ENCODE measurements at regions of chr13 and their contacts with region 1.

Region 1: DNA sequence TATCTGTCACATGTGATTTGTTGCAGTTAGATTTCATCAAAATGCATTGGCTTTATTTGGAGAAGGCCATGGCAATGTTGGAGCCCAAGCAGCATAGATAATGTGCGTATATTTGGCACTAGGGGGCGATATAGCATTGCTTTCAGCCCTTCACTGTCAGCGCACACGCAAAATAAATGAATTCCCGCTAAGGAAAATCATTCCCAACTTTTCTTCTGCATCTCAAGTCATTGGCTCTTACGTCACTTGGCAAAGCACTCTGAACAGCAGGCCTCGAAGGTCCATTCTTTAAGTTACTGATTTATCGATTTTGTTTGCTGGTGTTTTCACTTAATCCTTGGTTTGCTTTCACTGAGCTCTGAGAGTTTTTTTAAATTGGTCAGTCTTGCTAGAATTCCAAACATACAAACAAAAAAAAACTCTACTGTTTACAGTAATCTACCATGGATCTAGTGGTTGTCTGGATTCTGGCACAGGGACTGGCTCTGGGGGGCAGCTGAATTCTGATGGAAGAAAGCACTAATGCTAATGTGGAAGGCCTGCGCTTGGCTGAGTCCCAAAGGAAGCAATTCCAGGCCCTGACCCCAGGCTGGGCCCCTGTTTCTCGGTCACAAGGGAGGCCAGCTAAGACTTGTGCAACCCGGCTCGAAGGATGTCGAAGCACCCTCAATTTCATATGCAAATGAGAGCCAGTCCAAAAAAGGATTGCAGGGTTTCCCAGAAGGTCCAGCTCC is 97.7 kb upstream of the IPO5 start:
- DNase-seq: peak; percentile 61
- H3K4me3 ChIP-seq: no peak overlapping the region
- H3K27ac ChIP-seq: no peak overlapping the region
- H3K4me1 ChIP-seq: peaks cover 4% of the 10 kb centered on the region
- CTCF ChIP-seq: peak; percentile 83

Region 2: GRCh38 chr13:97386801-97387484 is 468.8 kb before region 1 on chr13:
- CTCF ChIA-PET with region 1: no interaction called
- POLR2A ChIA-PET with region 1: no interaction called
- intact Hi-C with region 1: no loop called
- DNase-seq: no peak
- H3K4me3 ChIP-seq: no peak overlapping the region
- H3K27ac ChIP-seq: no peak overlapping the region
- H3K4me1 ChIP-seq: no peaks in the 10 kb centered on the region
- CTCF ChIP-seq: no peak

Region 3: DNA sequence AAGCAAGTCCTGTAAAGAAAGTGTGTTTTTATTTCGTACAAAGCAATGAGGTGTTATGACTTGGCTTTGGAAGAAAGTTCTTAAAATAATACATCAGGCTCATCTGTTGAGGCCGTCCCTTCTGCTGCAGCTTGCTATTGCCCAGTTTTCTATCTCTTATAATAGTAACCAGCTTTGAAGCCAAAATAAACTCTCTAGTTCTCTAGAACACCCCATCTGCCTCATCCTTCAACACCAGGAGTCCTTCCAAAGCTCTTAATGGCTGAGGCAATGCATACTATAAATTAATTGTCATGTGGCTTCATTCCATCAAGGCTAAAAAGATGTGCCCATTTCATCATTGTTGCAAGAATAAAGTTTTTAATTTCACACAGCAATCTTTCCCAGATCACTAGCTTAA is 48.3 kb after region 1 on chr13:
- CTCF ChIA-PET with region 1: no interaction called
- POLR2A ChIA-PET with region 1: no interaction called
- intact Hi-C with region 1: no loop called
- DNase-seq: no peak
- H3K4me3 ChIP-seq: no peak overlapping the region
- H3K27ac ChIP-seq: no peak overlapping the region
- H3K4me1 ChIP-seq: no peaks in the 10 kb centered on the region
- CTCF ChIP-seq: no peak

Region 4: GRCh38 chr13:97975848-97976609 is 120.3 kb after region 1 on chr13:
- CTCF ChIA-PET with region 1: no interaction called
- POLR2A ChIA-PET with region 1: no interaction called
- intact Hi-C with region 1: loop called (anchors 5 kb)
- DNase-seq: peak; percentile 88
- H3K4me3 ChIP-seq: peak overlapping the region; percentile 87
- H3K27ac ChIP-seq: peak overlapping the region; percentile 73
- H3K4me1 ChIP-seq: peaks cover 23% of the 10 kb centered on the region
- CTCF ChIP-seq: no peak

Measured in OCI-LY7 (cell line).